Left cardiac atrium (tissue), 4 donors: ENCODE measurements at regions of chr15 and their contacts with region 1.

Region 1: DNA sequence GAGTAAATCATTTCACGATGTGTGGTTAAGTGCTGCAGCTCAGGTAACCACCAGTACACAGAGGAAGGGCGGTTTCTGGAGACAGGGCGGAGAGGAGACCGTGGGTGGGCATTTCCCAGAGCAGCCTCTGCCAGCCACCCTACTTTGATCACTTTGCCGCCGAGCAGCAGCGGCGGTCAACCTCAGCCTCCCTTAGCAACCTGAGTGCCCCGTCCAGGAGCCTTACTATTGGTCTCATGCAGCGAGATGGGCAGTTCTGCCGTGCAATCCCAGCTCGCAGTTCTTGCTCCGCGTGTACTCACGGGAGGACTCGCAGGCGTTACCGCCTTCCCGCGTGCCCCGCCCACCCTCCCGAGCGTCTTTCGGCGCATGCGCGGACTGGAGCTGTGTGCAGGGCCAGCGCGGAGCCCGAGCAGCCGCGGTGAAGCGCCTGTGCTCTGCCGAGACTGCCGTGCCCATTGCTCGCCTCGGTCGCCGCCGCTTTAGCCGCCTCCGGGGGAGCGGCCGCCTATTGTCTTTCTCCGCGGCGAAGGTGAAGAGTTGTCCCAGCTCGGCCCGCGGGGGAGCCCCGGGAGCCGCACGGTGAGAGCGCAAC is at the start of gene AKAP13:
- DNase-seq: peak; percentile 98
- ATAC-seq: peak; percentile 96
- total RNA-seq, gene AKAP13: 217 to 302 TPM

Region 2: GRCh38 chr15:84973492-84974460 is 406.5 kb before region 1 on chr15:
- intact Hi-C with region 1: no loop called
- DNase-seq: no peak
- ATAC-seq: no peak

Region 3: GRCh38 chr15:85280203-85280602 is 100.1 kb before region 1 on chr15:
- intact Hi-C with region 1: no loop called
- DNase-seq: no peak
- ATAC-seq: no peak

Region 4: GRCh38 chr15:85330901-85331588 is 49.3 kb before region 1 on chr15:
- intact Hi-C with region 1: loop called (anchors 5 to 10 kb)
- DNase-seq: peak; percentile 90
- ATAC-seq: peak; percentile 93

Region 5: DNA sequence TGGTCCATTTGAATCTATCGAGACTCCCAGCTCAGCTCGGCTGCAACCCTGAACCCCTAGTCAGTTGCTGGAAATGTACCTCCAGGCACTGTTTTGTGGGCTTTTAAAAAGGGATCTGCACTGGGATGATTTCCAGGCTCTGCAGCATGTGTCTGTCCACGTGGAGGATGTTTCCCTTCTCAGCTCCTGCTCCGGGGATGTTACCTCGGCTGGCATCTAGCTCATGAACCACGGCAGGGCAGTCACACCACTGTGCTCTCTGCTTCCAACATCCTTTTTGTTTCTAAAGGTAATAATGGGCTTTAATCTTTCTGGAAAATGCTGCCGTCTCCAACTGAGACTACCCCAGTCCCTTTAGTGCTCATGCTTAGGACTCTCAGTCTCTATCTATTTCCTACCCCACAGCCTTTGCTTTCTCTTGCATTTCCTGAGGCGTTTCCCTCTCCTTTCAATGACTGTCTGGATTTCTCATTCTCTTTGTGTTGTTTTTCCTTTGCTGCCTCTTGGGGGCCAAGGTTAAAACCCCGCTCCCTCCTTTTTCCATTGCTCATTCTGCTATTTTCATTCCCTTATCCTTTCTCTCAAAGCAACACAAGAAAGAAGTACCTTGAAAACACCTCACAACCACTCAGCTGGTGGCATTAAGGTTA is 42.8 kb before region 1 on chr15:
- intact Hi-C with region 1: loop called (anchors 5 to 10 kb)
- DNase-seq: no peak
- ATAC-seq: peak; percentile 18 to 64

Region 6: DNA sequence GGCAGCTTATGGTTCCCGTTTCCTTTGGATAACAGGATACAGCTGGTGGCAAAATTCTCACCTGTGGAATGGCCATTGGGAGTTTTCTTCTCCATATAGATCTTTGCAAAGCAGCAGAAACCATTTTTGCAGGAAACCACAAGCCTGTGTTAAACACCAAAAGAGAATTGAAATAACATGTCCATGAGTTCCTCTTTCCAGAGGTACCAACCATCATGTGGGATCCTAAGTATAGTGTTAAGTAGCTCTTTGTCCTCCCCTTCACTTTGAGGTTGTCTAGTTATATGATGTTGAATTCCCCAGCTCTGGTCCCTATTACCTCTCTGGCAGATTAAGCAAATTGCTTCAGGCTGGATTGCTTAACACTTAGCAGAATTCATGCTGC is 95.0 kb after region 1 on chr15:
- intact Hi-C with region 1: loop called in 1 of 2 experiments (anchors 10 kb)
- DNase-seq: no peak
- ATAC-seq: peak in 1 of 2 donors; percentile 25